Activated T-helper 1 cell treated with anti-CD3 and anti-CD28 coated beads, Interleukin-12 subunit alpha, Interleukin-12 subunit beta, Interleukin-2, Interleukin-4 antibody, amounts not matched to agents 30 ng/mL and 10 ng/mL and 1 ng/mL, durations not matched to agents 14 hours and 24 hours and 36 hours (primary cell): ENCODE measurements at regions of chr4 and their contacts with region 1.

Region 1: DNA sequence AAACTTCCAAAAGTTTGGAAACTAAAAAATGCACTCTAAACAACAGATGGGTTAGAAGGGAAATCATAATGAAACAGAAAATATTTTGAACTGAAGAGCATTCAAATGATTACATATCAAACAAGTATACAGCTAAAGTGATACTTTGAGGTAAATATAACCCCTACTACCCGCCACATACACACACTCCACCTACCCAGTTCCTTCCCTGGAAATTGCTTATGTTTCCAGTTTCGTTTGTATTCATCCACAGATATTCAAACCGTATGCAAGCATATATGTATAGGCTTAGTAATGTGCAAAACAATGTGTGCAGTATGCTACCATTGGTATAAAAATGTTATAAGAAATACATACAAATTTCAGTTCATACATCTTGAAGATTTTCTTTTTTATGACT is 95.5 kb downstream of the SMIM20 start:
- DNase-seq: no peak
- H3K4me3 Mint-ChIP-seq: no peak overlapping the region
- H3K27ac Mint-ChIP-seq: peak overlapping the region; percentile 11
- H3K4me1 Mint-ChIP-seq: peaks cover 12% of the 10 kb centered on the region
- H3K27me3 Mint-ChIP-seq: peaks cover 10% of the 10 kb centered on the region

Region 2: GRCh38 chr4:26020083-26020668 is 10.7 kb after region 1 on chr4:
- intact Hi-C with region 1: loop called (anchors 1 kb)
- DNase-seq: no peak
- H3K4me3 Mint-ChIP-seq: no peak overlapping the region
- H3K27ac Mint-ChIP-seq: peak overlapping the region; percentile 18
- H3K4me1 Mint-ChIP-seq: peaks cover 21% of the 10 kb centered on the region
- H3K27me3 Mint-ChIP-seq: peaks cover 9% of the 10 kb centered on the region